ENCODE measurements at regions of chr11 and their contacts with region 1.

Region 1: DNA sequence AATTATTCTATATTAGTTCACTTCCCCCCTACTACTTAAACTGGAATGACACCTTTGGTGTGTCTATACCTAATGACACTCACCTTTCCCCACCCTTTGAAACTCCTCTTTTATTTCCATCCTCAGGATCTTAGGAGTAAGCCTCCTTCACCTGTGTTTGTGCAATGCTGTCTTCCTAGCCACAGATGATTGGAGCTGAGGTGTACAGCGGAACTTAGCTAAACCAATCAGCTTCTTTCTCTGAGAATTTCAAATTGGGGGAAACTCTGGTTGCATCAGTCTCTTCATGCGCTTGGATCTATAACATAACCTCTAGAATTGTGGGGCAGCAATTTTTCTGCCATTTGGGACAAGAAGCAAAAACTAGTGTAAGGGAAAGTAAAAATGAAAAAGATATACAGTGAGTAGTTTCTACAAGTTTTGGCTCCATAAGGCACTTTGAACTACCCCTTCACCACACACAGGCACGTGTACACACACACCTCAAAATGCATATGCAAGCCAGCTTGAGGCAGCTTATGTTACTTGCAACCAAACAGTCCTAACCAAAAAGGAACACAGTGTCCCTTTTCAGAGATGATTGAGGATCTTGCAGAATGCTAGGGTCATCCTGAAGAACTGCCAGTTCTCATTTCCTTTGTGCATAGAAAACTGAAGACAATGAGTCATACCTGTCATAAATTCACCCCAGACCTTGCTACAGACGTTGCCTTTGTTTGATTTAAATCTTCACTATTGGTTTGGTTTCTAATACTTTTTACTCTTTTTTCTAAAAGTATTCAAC is 36.0 kb upstream of the LDLRAD3 start:
- DNase-seq: peak in 2 of 14 experiments; percentile 6 to 11
- ATAC-seq: no peak
- H3K4me3 ChIP-seq: no peak overlapping the region
- H3K4me3 Mint-ChIP-seq: no peak overlapping the region
- H3K27ac ChIP-seq: no peak overlapping the region
- H3K27ac Mint-ChIP-seq: no peak overlapping the region
- H3K4me1 ChIP-seq: no peaks in the 10 kb centered on the region
- H3K4me1 Mint-ChIP-seq: no peaks in the 10 kb centered on the region
- H3K27me3 ChIP-seq: no peaks in the 10 kb centered on the region
- H3K27me3 Mint-ChIP-seq: peaks cover 15% of the 10 kb centered on the region
- CTCF ChIP-seq: no peak

Region 2: GRCh38 chr11:35845860-35846259 is 62.0 kb before region 1 on chr11:
- CTCF ChIA-PET with region 1: no interaction called
- POLR2A ChIA-PET with region 1: no interaction called
- intact Hi-C with region 1: loop called in 1 of 2 experiments (anchors 10 kb)
- DNase-seq: no peak
- ATAC-seq: no peak
- H3K4me3 ChIP-seq: no peak overlapping the region
- H3K4me3 Mint-ChIP-seq: no peak overlapping the region
- H3K27ac ChIP-seq: no peak overlapping the region
- H3K27ac Mint-ChIP-seq: no peak overlapping the region
- H3K4me1 ChIP-seq: no peaks in the 10 kb centered on the region
- H3K4me1 Mint-ChIP-seq: no peaks in the 10 kb centered on the region
- H3K27me3 ChIP-seq: peaks cover 6% of the 10 kb centered on the region in 2 experiments
- H3K27me3 Mint-ChIP-seq: peaks cover 24% of the 10 kb centered on the region
- CTCF ChIP-seq: no peak